GM12878 (cell line): ENCODE measurements at regions of chr12 and their contacts with region 1.

Region 1: DNA sequence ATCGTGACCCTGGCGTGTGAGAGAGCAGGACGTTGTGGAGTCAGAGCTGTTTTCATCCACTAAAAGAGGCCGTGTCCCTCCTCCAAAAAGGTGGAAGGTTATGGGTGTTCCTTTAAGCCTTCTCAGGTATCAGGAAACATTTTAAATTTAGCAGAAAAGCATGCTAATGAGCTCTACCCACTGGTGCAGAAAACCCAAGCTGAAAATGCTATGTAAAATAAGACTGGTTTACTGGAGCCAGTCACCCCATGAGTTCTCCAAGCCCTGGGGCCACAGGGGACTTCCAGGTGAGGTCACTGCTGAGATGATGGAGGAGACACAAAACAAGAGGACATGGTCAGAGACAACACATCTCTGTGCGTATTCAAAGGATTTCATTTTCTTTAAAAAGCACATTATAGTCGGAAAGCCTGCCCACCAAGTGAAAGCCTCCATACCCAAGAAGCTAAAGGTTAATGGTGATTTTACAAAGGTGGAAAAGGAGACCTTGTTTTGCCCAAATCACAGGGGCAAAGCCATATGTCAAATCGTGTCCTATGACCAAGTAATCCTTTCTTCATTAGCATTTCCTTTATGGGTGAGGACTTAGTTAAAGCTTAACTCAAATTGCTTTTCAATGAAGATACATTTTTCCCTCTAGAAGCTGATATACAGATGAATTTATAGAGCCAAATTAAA is 14.2 kb downstream of the PRKAB1 start:
- DNase-seq: peak; percentile 51
- ATAC-seq: peak; percentile 93
- H3K4me3 ChIP-seq: peak overlapping the region; percentile 9; the same call in 1 of the 2 replicates
- H3K27ac ChIP-seq: peak overlapping the region; percentile 77
- H3K4me1 ChIP-seq: peaks cover 20% of the 10 kb centered on the region
- H3K27me3 ChIP-seq: no peaks in the 10 kb centered on the region
- CTCF ChIP-seq: no peak
- EP300 ChIP-seq: peak in 1 of 2 experiments; percentile 25; a peak in 1 of 4 replicates
- POLR2A ChIP-seq: peak; percentile 46; the same call in 1 of the 2 replicates
- RAD21 ChIP-seq: no peak

Region 2: GRCh38 chr12:119659289-119659897 is 22.7 kb before region 1 on chr12:
- CTCF ChIA-PET with region 1: interaction called, 13 read pairs
- POLR2A ChIA-PET with region 1: interaction called, 12 read pairs
- RAD21 ChIA-PET with region 1: interaction called, 3 read pairs
- SMC1A ChIA-PET with region 1: interaction called, 3 read pairs
- in situ Hi-C with region 1: no loop called
- intact Hi-C with region 1: no loop called
- DNase-seq: no peak
- ATAC-seq: peak; percentile 87
- H3K4me3 ChIP-seq: no peak overlapping the region
- H3K27ac ChIP-seq: no peak overlapping the region
- H3K4me1 ChIP-seq: no peaks in the 10 kb centered on the region
- H3K27me3 ChIP-seq: no peaks in the 10 kb centered on the region
- CTCF ChIP-seq: peak; percentile 82 to 90 (median 90)
- EP300 ChIP-seq: no peak
- POLR2A ChIP-seq: no peak
- RAD21 ChIP-seq: peak; percentile 42

Region 3: DNA sequence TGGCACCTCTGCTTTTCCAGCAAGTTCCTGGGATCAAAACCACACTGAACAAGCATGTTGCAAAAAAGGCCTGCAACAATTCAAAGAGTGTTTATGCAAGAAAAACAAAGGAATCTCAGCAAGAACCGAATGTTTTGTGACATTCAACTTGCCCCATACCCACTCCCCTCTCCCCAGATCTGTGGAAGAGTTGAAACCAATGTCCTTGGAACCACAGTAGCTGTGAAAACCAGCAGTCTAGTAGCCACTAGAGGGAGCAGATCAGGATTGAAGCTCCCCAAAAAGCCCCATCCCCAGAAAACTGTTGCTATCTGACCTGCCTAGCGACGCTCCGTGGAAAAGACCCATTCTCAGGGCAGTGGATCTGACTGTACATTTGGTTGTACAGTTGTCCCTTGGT is 12.9 kb after region 1 on chr12:
- CTCF ChIA-PET with region 1: interaction called, 11 read pairs
- POLR2A ChIA-PET with region 1: no interaction called
- RAD21 ChIA-PET with region 1: no interaction called
- SMC1A ChIA-PET with region 1: interaction called, 10 read pairs
- in situ Hi-C with region 1: no loop called
- intact Hi-C with region 1: no loop called
- DNase-seq: no peak
- ATAC-seq: no peak
- H3K4me3 ChIP-seq: no peak overlapping the region
- H3K27ac ChIP-seq: no peak overlapping the region
- H3K4me1 ChIP-seq: no peaks in the 10 kb centered on the region
- H3K27me3 ChIP-seq: no peaks in the 10 kb centered on the region
- CTCF ChIP-seq: peak; percentile 34 to 50 (median 44); a peak in 5 of 6 replicates
- EP300 ChIP-seq: no peak
- POLR2A ChIP-seq: no peak
- RAD21 ChIP-seq: no peak

Region 4: DNA sequence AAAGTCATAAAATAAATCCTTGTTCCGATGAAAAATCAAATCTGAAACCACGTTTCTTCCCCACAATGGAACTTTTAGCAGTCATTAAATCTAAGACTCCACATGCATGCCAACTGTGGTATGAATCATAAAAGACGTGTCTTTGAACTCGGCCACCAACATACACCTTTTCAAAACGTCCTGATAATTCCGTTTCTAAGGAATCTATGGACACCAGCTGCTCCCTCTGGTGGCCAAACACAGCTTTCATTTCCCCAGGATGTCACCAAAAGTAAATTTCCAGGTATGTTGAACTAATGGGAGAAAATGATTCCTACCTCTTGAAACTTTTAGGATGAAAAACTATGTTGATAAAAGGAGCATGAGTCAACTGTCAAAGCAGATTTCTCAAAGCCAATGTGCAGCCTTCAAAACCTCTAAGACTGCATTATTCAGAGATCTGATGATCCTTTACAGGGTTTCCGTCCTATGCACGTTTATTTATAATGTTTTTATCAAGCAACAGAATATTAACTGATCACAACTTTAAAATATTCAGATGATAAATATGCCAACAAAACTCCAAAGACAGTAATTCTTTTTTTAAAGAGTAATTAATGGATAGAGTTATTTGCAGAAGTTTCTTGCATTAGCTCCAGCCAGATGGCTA is 98.8 kb after region 1 on chr12:
- CTCF ChIA-PET with region 1: interaction called, 14 read pairs
- POLR2A ChIA-PET with region 1: no interaction called
- RAD21 ChIA-PET with region 1: interaction called, 4 read pairs
- SMC1A ChIA-PET with region 1: interaction called, 4 read pairs
- in situ Hi-C with region 1: no loop called
- intact Hi-C with region 1: no loop called
- DNase-seq: no peak
- ATAC-seq: no peak
- H3K4me3 ChIP-seq: no peak overlapping the region
- H3K27ac ChIP-seq: no peak overlapping the region; the same call in 1 of the 2 replicates
- H3K4me1 ChIP-seq: peaks cover 6% of the 10 kb centered on the region
- H3K27me3 ChIP-seq: no peaks in the 10 kb centered on the region
- CTCF ChIP-seq: peak; percentile 41 to 56 (median 56); a peak in 5 of 6 replicates
- EP300 ChIP-seq: no peak
- POLR2A ChIP-seq: no peak
- RAD21 ChIP-seq: 0 out of 2 replicates have a peak, but pooled peaks have one; percentile 17